Cardiac septum (tissue), 1 donor: ENCODE measurements at regions of chr2 and their contacts with region 1.

Region 1: GRCh38 chr2:29196792-29197788 is 81.9 kb downstream of the CLIP4 start:
- DNase-seq: no peak

Region 2: DNA sequence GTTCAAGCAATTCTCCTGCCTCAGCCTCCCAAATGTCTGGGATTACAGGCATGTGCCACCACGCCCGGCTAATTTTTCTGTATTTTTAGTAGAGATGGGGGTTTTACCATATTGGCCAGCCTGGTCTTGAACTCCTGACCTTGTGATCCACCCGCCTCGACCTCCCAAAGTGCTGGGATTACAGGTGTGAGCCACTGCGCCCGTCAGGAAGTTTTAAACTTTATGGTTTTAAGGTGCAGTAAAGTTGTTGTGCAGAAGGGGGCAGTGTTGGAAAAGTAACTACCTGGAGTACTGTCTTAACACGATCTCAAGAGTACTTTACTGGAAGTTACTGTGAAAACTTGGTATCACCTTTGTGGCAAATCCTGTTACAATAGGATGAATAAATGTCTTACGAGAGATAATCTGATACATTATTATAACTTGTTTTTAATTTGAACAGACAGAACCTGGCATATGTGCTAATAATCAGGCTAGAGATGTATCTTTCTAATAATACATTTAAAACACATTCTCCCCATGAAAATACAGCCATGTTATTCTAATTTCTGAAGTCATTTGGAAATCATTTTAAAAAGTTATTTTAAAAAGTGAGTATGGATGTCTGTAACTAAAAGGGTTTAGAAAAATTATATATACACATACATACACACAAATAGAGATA is 375.7 kb before region 1 on chr2:
- intact Hi-C with region 1: loop called (anchors 10 kb)
- DNase-seq: no peak

Region 3: DNA sequence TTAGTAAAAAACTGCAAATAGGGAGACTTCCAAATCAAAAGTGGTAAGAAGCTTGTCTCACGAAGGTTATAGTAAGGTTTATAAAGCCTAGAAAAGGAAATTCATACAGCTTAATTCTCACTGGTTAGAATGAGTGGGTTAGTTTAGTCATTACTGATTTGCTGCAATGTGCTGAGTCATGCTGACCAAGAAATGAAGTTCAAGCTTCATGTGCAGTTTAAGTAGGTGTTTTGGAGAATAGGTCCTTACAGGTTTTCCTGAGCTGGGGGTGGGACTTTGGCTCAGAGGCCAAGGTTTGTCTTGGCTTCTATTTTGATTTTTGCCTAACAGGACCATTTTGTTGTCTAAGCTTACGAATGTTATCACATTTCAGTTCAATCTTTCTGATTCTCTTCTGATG is 66.8 kb before region 1 on chr2:
- intact Hi-C with region 1: no loop called
- DNase-seq: no peak